ENCODE measurements at regions of chr14 and their contacts with region 1.

Region 1: GRCh38 chr14:23068476-23069412 is 11.4 kb upstream of the CDH24 start:
- DNase-seq: peak; percentile 85
- ATAC-seq: peak; percentile 75
- H3K4me3 Mint-ChIP-seq: peak overlapping the region; percentile 48
- H3K27ac Mint-ChIP-seq: peak overlapping the region; percentile 50
- H3K4me1 Mint-ChIP-seq: peaks cover 34% of the 10 kb centered on the region
- H3K27me3 Mint-ChIP-seq: no peaks in the 10 kb centered on the region

Region 2: DNA sequence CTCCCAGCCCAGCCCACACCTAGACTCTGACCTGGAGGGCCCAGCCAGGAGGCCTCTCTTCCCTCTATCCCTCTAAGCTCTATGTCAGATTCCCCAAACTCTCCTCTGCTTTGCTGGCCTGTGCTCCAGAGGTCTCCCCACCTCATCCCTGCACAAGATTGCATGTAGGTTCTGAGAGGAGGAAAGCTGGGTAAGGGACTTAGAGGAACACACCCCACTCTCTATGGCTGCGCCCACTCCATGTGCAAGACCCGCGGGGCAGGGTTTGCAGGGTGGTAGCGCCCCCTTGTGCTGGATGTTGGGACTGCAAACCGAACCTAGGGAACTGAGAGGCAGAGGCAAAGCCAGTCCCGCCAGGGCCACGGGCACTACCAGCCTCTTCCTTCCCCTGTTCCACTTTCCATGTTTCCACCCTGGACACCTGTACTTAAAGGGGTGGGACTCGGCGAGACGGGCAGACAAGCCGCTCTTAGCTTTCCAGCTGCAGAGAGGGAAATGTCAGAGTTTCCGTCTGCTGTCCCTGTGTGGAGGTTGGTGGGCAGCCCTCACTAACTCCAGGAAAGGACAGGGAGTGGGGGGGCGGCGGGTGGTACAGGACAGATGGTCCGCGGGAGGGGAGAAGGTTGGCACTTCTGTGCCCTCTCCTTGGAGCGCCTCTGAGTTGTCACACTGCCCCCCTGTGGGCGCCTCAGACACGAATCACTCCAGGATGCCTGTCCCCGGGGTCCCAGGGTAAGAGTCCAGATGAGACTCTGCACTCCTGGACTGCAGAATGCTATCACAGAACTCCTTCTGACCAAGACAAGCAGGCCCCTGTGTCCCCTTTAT is 215.6 kb before region 1 on chr14:
- CTCF ChIA-PET with region 1: no interaction called
- DNase-seq: peak; percentile 93
- ATAC-seq: peak; percentile 87
- H3K4me3 Mint-ChIP-seq: peak overlapping the region; percentile 70
- H3K27ac Mint-ChIP-seq: peak overlapping the region; percentile 79
- H3K4me1 Mint-ChIP-seq: peaks cover 37% of the 10 kb centered on the region
- H3K27me3 Mint-ChIP-seq: peaks cover 32% of the 10 kb centered on the region

Region 3: DNA sequence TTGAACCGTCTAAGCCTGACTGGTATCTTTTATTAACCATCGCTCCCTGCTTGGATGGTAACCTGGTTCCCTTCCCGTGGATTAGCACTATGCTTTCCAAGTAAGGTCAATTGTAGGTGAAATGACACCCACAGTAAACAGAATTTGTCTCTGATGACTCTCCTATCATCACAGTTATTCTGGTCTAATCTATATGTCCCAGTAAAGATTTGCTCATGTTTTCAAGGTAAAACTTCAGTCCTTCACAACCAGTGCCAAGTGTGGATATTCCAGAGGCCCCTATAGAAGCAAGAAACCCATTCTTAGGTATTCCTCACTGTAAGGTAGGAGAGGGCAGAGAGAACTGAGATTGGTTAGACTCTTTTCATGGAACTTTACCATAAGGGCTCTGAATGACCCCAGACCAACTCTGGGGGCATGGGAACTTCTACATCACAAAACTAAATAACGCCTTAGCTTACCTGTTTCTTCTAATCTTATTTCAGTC is 101.9 kb before region 1 on chr14:
- CTCF ChIA-PET with region 1: interaction called, 17 read pairs
- DNase-seq: no peak
- ATAC-seq: no peak
- H3K4me3 Mint-ChIP-seq: no peak overlapping the region
- H3K27ac Mint-ChIP-seq: no peak overlapping the region
- H3K4me1 Mint-ChIP-seq: no peaks in the 10 kb centered on the region
- H3K27me3 Mint-ChIP-seq: peaks cover 11% of the 10 kb centered on the region

Region 4: DNA sequence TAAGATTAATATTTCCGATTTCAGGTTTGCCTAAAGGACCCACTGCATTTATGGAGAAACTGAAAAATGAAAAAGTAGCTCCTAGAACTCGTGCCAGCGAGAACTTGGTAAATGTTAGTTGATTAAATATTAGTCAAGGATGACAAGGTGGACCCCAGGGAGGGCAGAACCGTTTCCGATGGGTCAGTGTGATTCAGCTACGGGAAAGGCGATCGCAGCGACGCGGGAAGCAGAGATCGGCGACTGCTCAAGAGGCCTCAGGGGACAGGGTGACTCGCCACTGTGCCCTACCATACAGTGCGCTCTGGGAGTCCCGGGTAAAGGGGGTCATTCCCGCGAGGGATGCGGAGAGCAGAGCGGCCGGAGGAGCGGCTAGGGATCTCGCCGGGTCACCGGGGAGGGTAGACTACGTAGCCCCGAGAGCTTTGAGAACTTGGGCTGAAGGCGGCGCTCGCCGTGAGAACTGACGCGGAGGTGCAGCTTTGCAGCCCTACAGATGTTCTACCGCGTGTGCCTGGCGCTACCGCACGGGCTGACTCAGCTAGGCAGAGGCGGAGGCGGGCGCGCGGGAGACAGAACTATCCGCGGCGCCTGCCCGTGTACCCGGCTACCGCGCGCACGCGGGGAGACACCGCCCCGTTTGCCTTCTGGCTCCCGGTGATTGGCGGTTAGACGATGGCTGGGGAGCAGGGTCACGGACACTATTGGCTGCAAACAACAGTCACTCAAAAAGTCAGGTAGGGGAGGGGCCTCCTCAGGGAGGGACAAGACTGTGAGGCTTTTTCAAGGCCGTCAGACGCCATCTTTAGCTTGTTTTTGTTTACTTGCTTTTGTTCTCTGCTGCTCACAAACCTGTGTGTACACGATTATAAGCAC is 62.0 kb before region 1 on chr14:
- CTCF ChIA-PET with region 1: interaction called, 867 read pairs
- DNase-seq: peak; percentile 98
- ATAC-seq: peak; percentile 97
- H3K4me3 Mint-ChIP-seq: peak overlapping the region; percentile 93
- H3K27ac Mint-ChIP-seq: peak overlapping the region; percentile 96
- H3K4me1 Mint-ChIP-seq: peaks cover 44% of the 10 kb centered on the region
- H3K27me3 Mint-ChIP-seq: no peaks in the 10 kb centered on the region

Region 5: DNA sequence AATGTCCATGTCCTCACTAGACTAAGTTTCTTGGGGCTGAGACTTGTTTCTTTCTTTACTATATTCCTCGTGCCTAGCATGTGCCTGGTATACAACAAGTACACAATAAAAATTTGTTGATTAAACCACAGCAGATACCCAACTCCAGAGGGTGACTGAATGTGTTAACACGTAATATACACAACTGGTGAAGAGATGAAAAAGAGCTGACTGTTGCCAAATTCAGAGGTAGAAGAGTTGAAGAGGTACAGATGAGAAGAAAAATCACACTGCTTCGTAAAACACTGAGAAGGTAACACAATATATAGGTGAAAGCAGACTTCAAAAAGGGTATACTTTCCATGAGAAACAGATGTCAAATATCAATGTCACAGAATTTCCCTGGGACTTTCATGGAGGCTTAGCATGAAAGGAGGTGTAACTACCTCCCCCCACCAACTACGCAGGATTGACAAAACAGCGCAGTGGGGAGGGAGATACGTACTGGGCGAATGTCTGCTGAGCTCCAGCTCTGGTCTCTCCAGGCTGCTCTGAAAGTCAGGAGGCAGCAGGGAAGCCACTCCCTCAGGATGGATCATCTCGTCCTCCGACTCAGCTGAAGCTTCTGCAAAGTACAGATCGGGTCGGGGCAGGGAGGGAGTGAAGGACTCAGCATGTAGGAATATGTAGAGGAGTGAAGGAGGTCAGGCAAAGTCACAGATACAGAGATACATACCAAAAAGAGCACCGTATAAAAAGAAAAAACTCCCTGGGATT is 20.9 kb after region 1 on chr14:
- CTCF ChIA-PET with region 1: interaction called, 51 read pairs
- DNase-seq: no peak
- ATAC-seq: no peak
- H3K4me3 Mint-ChIP-seq: no peak overlapping the region
- H3K27ac Mint-ChIP-seq: no peak overlapping the region
- H3K4me1 Mint-ChIP-seq: peaks cover 31% of the 10 kb centered on the region
- H3K27me3 Mint-ChIP-seq: no peaks in the 10 kb centered on the region

Region 6: DNA sequence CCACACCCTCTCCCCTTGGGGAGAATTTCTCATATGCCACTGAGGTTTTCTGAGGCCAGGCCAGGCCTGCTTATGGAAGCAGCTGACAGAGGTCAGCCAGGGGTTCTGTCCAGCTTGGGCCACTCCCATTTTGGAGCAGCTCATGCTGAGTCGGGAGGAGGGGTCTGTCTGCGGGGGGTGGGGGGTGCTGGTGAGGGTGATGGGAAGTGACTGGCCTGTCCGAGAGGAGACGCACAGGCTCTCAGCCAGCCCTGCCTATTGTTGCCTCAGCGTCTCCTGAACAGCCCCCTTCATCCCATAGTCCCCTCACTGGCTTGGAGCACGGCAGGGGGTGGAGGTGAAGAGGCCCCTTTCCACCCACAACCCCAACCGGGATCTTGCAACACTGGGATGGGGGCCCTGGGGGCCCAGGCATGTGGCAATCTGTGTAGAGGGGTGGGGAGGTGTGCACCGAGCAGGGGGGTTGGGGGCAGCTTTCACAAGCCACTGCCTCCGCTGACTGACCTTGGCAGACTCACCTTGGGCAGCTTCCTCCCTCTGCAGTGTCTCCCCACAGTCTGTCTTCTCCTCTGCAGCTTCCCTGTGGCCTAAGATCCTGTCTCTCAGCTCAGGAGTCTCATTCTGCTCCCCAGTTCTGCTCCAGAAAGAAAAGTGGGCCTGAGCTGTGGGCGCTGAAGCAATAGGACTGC is 44.8 kb after region 1 on chr14:
- CTCF ChIA-PET with region 1: interaction called, 25 read pairs
- DNase-seq: no peak
- ATAC-seq: no peak
- H3K4me3 Mint-ChIP-seq: no peak overlapping the region
- H3K27ac Mint-ChIP-seq: no peak overlapping the region
- H3K4me1 Mint-ChIP-seq: peaks cover 21% of the 10 kb centered on the region
- H3K27me3 Mint-ChIP-seq: peaks cover 3% of the 10 kb centered on the region

Measured in activated CD8-positive, alpha-beta memory T cell treated with anti-CD3 and anti-CD28 coated beads, Interleukin-2, amount 10 ng/mL, durations not matched to agents 7 days and 5 days (primary cell).